Activated B cell treated with CpG ODN at 0.5 μM for 24 hours (primary cell): ENCODE measurements at regions of chr7 and their contacts with region 1.

Region 1: GRCh38 chr7:99115379-99115778 is 28.5 kb downstream of the SMURF1 start:
- DNase-seq: no peak
- ATAC-seq: no peak
- H3K4me3 Mint-ChIP-seq: no peak overlapping the region
- H3K27ac Mint-ChIP-seq: no peak overlapping the region
- H3K4me1 Mint-ChIP-seq: peaks cover 57% of the 10 kb centered on the region
- H3K27me3 Mint-ChIP-seq: no peaks in the 10 kb centered on the region
- CTCF ChIP-seq: no peak

Region 2: GRCh38 chr7:99079104-99079503 is 36.3 kb before region 1 on chr7:
- CTCF ChIA-PET with region 1: no interaction called
- POLR2A ChIA-PET with region 1: no interaction called
- intact Hi-C with region 1: no loop called
- DNase-seq: no peak
- ATAC-seq: no peak
- H3K4me3 Mint-ChIP-seq: no peak overlapping the region
- H3K27ac Mint-ChIP-seq: no peak overlapping the region
- H3K4me1 Mint-ChIP-seq: peaks cover 35% of the 10 kb centered on the region
- H3K27me3 Mint-ChIP-seq: no peaks in the 10 kb centered on the region
- CTCF ChIP-seq: no peak

Region 3: DNA sequence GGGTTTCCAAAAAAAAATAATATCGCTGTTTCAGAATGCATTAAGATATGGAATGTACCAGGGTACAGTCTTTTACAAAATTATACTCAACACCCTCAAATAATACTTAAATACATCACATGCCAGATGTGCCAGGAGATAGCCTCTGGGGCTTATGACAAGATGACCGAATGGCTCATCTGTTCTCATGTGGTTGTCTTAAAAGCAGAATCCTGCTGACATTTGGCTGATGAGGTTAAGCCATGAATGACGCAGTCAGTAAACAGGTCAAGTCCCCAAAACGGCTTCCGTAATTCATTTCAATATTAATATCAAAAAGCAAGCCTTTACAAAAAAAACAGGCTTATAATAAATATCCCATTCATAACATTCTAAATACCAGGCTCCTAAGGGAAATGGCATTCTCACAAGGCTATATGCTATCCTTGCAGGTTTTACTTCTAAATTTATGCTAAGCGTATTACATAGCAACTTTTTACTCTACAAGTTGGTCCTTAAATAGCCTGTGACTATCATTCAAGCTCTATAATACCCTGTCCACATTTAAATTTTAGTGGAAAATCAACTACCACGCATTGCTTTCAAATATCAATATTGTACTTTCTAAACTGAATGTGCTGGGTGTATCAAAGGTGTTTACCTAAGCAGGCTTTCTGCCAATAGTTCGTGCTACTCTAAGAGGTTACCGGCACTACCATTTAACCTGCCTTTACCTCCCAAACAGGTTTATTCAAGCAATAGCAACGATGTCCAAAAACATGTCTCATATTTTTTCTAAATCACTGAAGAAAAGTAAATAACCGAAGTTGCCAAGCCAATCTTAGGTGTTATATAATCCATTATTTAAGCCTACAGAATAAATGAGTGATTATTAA is 12.9 kb after region 1 on chr7:
- CTCF ChIA-PET with region 1: no interaction called
- POLR2A ChIA-PET with region 1: interaction called, 3 read pairs
- intact Hi-C with region 1: loop called (anchors 2 kb)
- DNase-seq: no peak
- ATAC-seq: no peak
- H3K4me3 Mint-ChIP-seq: no peak overlapping the region
- H3K27ac Mint-ChIP-seq: no peak overlapping the region
- H3K4me1 Mint-ChIP-seq: peaks cover 43% of the 10 kb centered on the region
- H3K27me3 Mint-ChIP-seq: no peaks in the 10 kb centered on the region
- CTCF ChIP-seq: no peak